Activated naive CD4-positive, alpha-beta T cell treated with anti-CD3 and anti-CD28 coated beads for 36 hours (primary cell): ENCODE measurements at regions of chr17 and their contacts with region 1.

Region 1: GRCh38 chr17:39980351-39981206 is at the start of gene PSMD3:
- DNase-seq: peak; percentile 99
- H3K4me3 Mint-ChIP-seq: peak within 1 kb of the TSS; percentile 88
- H3K27ac Mint-ChIP-seq: peak within 1 kb of the TSS; percentile 80
- H3K4me1 Mint-ChIP-seq: peaks cover 39% of the 10 kb centered on the region
- H3K27me3 Mint-ChIP-seq: peaks cover 2% of the 10 kb centered on the region
- total RNA-seq, gene PSMD3: 122 to 125 TPM

Region 2: GRCh38 chr17:39872751-39873150 is 107.8 kb before region 1 on chr17:
- CTCF ChIA-PET with region 1: interaction called, 18 read pairs
- intact Hi-C with region 1: loop called (anchors 1 kb)
- DNase-seq: no peak
- H3K4me3 Mint-ChIP-seq: no peak overlapping the region
- H3K27ac Mint-ChIP-seq: no peak overlapping the region
- H3K4me1 Mint-ChIP-seq: peaks cover 9% of the 10 kb centered on the region
- H3K27me3 Mint-ChIP-seq: no peaks in the 10 kb centered on the region

Region 3: GRCh38 chr17:39939588-39940419 is 40.8 kb before region 1 on chr17:
- CTCF ChIA-PET with region 1: no interaction called
- intact Hi-C with region 1: loop called (anchors 5 kb)
- DNase-seq: peak; percentile 75
- H3K4me3 Mint-ChIP-seq: no peak overlapping the region
- H3K27ac Mint-ChIP-seq: peak overlapping the region; percentile 36
- H3K4me1 Mint-ChIP-seq: peaks cover 14% of the 10 kb centered on the region
- H3K27me3 Mint-ChIP-seq: no peaks in the 10 kb centered on the region

Region 4: DNA sequence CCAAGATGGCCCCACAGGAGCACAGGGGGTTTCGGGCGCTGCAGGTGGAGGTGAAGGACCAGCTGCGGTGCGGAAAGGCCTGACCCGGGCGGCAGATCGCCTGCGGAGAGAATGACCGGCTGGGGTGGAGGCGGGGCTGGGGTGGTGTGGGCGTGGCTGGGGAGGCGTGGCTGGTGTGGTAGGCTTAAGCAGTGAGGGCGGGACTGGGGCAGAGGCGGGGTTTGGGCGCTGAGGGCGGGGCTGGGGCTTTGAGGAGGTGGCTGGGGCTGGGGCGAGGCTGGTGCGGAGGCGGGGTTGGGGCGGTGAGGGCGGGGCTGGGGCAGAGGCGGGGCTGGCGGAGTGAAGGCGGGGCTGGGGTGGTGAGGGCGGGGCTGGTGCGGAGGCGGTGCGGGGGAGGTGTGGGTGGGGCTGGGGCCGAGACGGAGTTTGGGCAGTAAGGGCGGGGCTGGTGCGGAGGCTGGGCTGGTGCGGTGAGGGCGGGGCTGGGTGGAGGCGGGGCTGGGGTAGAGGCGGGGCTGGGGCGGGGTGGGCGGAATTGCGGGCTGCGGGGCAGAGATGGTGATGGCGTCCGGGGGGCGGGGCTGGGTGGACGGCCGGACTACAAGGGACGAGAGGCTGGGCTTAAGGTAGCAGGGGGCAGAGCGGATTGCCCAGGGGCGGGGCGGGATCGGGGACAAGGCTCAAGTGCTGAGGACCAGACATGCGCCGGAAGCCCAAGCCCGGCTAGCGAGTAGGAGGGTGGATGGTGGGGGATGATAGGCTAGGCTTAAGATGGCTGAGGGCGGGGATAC is 27.7 kb before region 1 on chr17:
- CTCF ChIA-PET with region 1: interaction called, 34 read pairs
- intact Hi-C with region 1: loop called (anchors 1 kb)
- DNase-seq: peak; percentile 98
- H3K4me3 Mint-ChIP-seq: peak overlapping the region; percentile 79
- H3K27ac Mint-ChIP-seq: peak overlapping the region; percentile 66
- H3K4me1 Mint-ChIP-seq: peaks cover 10% of the 10 kb centered on the region
- H3K27me3 Mint-ChIP-seq: no peaks in the 10 kb centered on the region

Region 5: GRCh38 chr17:39963829-39964228 is 16.8 kb before region 1 on chr17:
- CTCF ChIA-PET with region 1: interaction called, 34 read pairs
- intact Hi-C with region 1: loop called (anchors 1 kb)
- DNase-seq: peak; percentile 63
- H3K4me3 Mint-ChIP-seq: no peak overlapping the region
- H3K27ac Mint-ChIP-seq: peak overlapping the region; percentile 73
- H3K4me1 Mint-ChIP-seq: peaks cover 19% of the 10 kb centered on the region
- H3K27me3 Mint-ChIP-seq: no peaks in the 10 kb centered on the region